ENCODE measurements at regions of chr17 and their contacts with region 1.

Region 1: DNA sequence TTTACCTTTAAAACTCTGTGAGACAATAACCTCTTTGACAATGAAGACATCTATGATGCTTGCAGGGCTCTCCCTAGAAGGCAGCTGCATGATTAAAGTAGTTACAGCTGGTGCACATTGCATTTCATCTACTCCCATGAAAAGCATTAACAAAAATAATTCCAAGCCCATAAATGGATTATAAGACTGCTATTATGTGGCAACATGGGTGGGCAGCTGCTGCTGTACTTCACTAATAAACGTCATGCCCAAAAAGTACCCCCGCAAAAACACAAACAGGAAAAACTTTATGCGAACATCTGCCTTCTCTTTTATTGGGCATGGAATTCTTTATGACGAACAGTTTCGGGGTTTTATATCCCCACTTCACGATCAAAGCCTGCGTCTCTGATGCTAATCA is 224.9 kb downstream of the CA10 start:
- DNase-seq: no peak
- ATAC-seq: no peak
- H3K4me3 ChIP-seq: no peak overlapping the region
- H3K27ac ChIP-seq: no peak overlapping the region
- H3K4me1 ChIP-seq: no peaks in the 10 kb centered on the region
- H3K27me3 ChIP-seq: no peaks in the 10 kb centered on the region
- CTCF ChIP-seq: no peak
- POLR2A ChIP-seq: no peak

Region 2: DNA sequence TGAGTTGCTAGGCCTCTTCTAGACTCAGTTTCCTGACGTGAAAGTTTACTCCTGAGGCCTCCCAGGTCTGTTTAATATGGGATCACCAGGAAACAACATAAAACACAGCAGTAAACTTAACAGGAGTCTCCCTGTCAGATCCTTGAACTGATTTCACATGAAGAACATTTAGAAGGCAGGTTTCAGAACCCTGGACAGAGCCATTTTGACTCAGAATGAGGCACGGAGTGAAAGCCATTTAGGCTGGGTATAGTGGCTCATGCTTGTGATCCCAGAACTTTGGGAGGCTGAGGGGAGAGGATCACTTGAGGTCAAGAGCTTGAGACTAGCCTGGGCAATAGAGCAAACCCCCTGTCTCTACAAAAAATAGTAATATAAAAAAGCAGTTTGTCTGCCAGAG is 64.3 kb before region 1 on chr17:
- intact Hi-C with region 1: no loop called
- DNase-seq: no peak
- ATAC-seq: no peak
- H3K4me3 ChIP-seq: no peak overlapping the region
- H3K27ac ChIP-seq: no peak overlapping the region
- H3K4me1 ChIP-seq: no peaks in the 10 kb centered on the region
- H3K27me3 ChIP-seq: no peaks in the 10 kb centered on the region
- CTCF ChIP-seq: no peak
- POLR2A ChIP-seq: no peak

Region 3: DNA sequence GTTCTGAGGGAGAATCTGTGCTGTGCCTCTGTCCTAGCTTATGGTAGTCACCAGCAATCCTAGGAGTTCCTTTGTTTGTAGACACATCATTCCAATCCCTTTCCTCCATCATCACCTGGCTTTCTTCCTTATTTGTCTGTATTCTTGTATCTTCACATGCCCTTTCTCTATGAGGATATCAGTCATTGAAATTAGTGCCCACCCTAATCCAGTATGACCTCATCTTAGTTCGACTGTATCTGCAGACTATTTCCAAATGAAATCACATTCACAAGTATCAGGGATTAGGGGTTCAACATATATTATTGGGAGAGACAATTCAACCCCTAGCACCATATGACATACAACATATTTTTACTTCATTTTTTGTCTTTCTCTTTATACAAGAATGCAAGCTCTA is 48.9 kb before region 1 on chr17:
- intact Hi-C with region 1: loop called in 1 of 10 experiments (anchors 5 kb)
- DNase-seq: no peak
- ATAC-seq: no peak
- H3K4me3 ChIP-seq: no peak overlapping the region
- H3K27ac ChIP-seq: no peak overlapping the region
- H3K4me1 ChIP-seq: no peaks in the 10 kb centered on the region
- H3K27me3 ChIP-seq: no peaks in the 10 kb centered on the region
- CTCF ChIP-seq: no peak
- POLR2A ChIP-seq: no peak

Region 4: GRCh38 chr17:51995797-51996403 is 62.3 kb after region 1 on chr17:
- intact Hi-C with region 1: loop called in 1 of 10 experiments (anchors 10 kb)
- DNase-seq: no peak
- ATAC-seq: no peak
- H3K4me3 ChIP-seq: no peak overlapping the region
- H3K27ac ChIP-seq: no peak overlapping the region
- H3K4me1 ChIP-seq: no peaks in the 10 kb centered on the region
- H3K27me3 ChIP-seq: no peaks in the 10 kb centered on the region
- CTCF ChIP-seq: no peak
- POLR2A ChIP-seq: no peak

Region 5: GRCh38 chr17:52776234-52776633 is 842.6 kb after region 1 on chr17:
- intact Hi-C with region 1: no loop called
- DNase-seq: no peak
- ATAC-seq: no peak
- H3K4me3 ChIP-seq: no peak overlapping the region
- H3K27ac ChIP-seq: no peak overlapping the region
- H3K4me1 ChIP-seq: no peaks in the 10 kb centered on the region
- H3K27me3 ChIP-seq: no peaks in the 10 kb centered on the region
- CTCF ChIP-seq: no peak
- POLR2A ChIP-seq: no peak